ENCODE measurements at regions of chr5 and their contacts with region 1.

Region 1: GRCh38 chr5:89729623-89730301 is 679.8 kb downstream of the CETN3 start:
- DNase-seq: peak; percentile 34
- ATAC-seq: peak; percentile 76
- H3K4me3 ChIP-seq: no peak overlapping the region
- H3K27ac ChIP-seq: no peak overlapping the region
- H3K4me1 ChIP-seq: peaks cover 7% of the 10 kb centered on the region; the same call in 1 of the 2 replicates
- H3K27me3 ChIP-seq: no peaks in the 10 kb centered on the region
- CTCF ChIP-seq: peak; percentile 26 to 54 (median 27); a peak in 4 of 6 replicates
- EP300 ChIP-seq: no peak
- POLR2A ChIP-seq: no peak
- RAD21 ChIP-seq: peak; percentile 65

Region 2: DNA sequence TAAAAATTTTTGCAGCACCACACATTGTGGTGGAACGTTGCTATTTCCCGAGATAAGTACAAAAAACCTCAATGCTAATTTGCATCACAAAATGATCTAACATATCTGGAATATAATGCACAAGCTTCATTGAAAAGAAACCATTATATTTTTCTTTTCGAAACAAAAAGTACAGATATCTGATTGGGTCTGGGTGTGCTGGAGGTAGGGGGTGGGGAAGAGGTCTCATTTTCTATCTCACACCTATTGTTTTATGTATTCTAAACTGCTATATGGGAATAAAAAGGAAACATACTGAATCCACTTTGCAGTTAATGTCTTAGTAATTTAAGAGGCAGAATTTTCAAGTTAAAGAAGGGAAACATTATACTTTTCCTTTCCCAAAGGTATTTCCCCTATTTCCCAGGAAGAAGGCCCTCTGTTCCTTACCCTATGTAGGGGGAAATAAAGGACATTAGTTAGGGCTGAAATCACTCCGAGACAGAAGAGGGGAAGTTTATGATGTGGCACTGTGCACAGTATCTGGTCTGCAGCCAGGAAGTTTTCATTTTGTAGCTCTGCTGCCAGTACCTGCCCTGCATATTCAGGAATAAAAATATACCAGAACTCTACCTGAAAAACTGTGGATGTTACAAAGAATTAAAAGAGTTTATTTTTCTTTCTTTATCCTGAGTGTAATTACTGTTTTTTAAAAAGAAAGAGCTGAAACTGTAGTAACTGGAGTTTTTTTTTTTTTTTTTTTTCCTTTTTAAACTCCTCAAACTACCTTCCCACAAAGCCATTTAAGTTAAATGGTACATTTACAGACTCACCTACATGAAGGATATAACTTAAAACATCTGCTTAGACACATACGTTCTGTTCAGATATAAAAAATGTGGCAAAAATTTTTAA is 854.2 kb before region 1 on chr5:
- CTCF ChIA-PET with region 1: interaction called, 5 read pairs
- POLR2A ChIA-PET with region 1: no interaction called
- RAD21 ChIA-PET with region 1: interaction called, 5 read pairs
- SMC1A ChIA-PET with region 1: interaction called, 4 read pairs
- in situ Hi-C with region 1: no loop called
- intact Hi-C with region 1: loop called (anchors 5 kb)
- DNase-seq: no peak
- ATAC-seq: peak; percentile 65
- H3K4me3 ChIP-seq: peak overlapping the region; percentile 65
- H3K27ac ChIP-seq: peak overlapping the region; percentile 67
- H3K4me1 ChIP-seq: no peaks in the 10 kb centered on the region
- H3K27me3 ChIP-seq: no peaks in the 10 kb centered on the region
- CTCF ChIP-seq: no peak
- EP300 ChIP-seq: no peak
- POLR2A ChIP-seq: peak; percentile 22; the same call in 1 of the 2 replicates
- RAD21 ChIP-seq: no peak

Region 3: DNA sequence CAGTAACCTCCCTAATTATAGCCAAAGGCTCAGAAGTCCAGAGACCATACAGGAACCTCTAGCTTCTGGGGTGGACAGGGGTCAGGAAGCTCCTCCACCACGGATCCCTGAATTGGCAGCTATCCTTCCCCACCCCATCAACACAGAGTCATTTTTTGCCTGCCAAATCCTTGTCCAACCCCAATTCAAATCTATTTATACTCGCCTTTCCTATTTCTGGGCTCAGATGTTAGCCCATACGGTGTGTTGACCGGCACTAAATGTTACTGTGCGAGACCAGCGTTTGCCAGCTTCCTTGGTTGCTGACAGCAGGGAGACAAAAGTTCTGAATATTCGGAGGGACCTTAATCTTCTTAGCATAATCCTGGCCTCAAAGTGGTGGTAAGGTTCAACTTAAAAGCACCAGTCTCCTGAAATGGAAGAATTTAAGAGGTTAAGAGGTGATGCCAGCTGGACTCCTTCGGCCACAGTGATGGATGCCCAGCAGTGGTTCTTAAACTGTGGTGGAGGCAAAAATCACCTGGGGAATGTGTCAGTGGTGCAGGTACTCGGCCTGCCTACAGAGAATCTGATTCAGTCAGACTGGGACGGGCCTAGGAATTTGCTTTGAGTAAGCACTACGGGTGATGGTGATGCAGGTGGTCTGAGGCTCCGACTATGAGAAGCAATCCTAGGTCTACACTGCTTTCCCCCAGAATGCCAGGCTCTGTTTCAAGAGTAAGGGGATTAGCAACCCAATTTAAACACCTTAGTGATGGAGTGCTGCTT is 642.0 kb before region 1 on chr5:
- CTCF ChIA-PET with region 1: interaction called, 10 read pairs
- POLR2A ChIA-PET with region 1: no interaction called
- RAD21 ChIA-PET with region 1: interaction called, 4 read pairs
- SMC1A ChIA-PET with region 1: interaction called, 4 read pairs
- in situ Hi-C with region 1: no loop called
- intact Hi-C with region 1: no loop called
- DNase-seq: no peak
- ATAC-seq: peak; percentile 36; the same call in 2 of the 3 replicates
- H3K4me3 ChIP-seq: no peak overlapping the region
- H3K27ac ChIP-seq: no peak overlapping the region
- H3K4me1 ChIP-seq: no peaks in the 10 kb centered on the region
- H3K27me3 ChIP-seq: no peaks in the 10 kb centered on the region
- CTCF ChIP-seq: no peak
- EP300 ChIP-seq: no peak
- POLR2A ChIP-seq: no peak
- RAD21 ChIP-seq: no peak

Region 4: DNA sequence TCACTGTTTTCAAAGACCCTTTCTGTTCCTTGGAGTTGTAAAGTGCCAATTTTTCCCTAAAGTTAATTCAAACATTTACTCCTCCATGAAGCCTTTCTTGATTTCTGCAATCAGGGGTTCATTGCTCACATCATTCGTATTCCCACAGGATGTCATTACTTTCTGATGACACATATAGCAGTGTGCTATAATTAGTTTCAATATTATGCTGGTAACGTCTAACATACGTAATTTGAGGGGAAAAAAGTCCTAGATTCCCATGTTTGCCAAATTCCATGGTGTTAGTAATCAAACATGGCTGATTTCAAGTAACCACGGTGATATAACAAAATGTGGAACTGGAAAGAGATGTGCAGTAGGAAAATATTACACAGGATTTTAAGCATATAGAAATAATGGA is 378.5 kb before region 1 on chr5:
- CTCF ChIA-PET with region 1: interaction called, 4 read pairs
- POLR2A ChIA-PET with region 1: no interaction called
- RAD21 ChIA-PET with region 1: interaction called, 6 read pairs
- SMC1A ChIA-PET with region 1: interaction called, 10 read pairs
- in situ Hi-C with region 1: no loop called
- intact Hi-C with region 1: no loop called
- DNase-seq: no peak
- ATAC-seq: peak; percentile 16
- H3K4me3 ChIP-seq: no peak overlapping the region
- H3K27ac ChIP-seq: peak overlapping the region; percentile 68; the same call in 1 of the 2 replicates
- H3K4me1 ChIP-seq: peaks cover 18% of the 10 kb centered on the region; the same call in 1 of the 2 replicates
- H3K27me3 ChIP-seq: no peaks in the 10 kb centered on the region
- CTCF ChIP-seq: no peak
- EP300 ChIP-seq: 0 out of 4 replicates have a peak, but pooled peaks of 1 of the 2 experiments have one; percentile 54
- POLR2A ChIP-seq: no peak
- RAD21 ChIP-seq: no peak

Region 5: DNA sequence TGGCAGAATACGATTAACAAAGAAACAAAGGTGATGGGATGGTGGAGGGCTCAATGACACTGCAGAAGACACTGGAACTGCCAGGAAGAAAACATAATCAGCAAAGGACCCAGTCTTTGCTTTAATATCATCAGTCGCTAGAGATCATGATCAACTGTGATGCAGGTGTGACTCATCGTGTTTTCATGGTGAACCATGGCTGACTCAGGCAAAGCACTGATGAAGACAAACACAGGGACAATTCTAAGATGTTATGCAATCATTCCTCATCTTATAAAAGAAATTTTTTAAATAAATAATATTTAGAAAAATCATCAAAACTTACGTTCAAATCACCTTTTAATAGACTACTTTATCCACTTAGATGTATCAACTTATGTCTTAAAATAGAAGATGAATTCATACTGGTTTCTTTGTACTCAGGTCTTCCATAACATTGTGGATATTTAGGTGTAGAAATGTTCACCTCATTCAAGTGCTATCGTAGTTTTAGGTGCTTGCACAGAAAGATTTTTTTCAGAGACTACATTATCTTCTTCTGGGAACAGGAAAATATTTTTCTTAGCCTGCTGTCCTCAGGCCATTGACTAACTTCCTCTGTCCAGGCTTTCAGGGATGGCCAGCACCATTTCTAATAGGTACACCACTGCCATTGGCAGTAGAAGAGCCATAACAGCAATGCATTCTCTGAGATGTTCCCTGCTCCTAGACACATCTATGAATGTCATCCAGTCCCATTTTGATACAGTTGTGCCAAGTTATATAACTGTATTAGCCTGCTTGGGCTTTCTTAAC is 173.3 kb before region 1 on chr5:
- CTCF ChIA-PET with region 1: no interaction called
- POLR2A ChIA-PET with region 1: no interaction called
- RAD21 ChIA-PET with region 1: no interaction called
- SMC1A ChIA-PET with region 1: no interaction called
- in situ Hi-C with region 1: no loop called
- intact Hi-C with region 1: no loop called
- DNase-seq: no peak
- ATAC-seq: no peak
- H3K4me3 ChIP-seq: no peak overlapping the region
- H3K27ac ChIP-seq: no peak overlapping the region
- H3K4me1 ChIP-seq: no peaks in the 10 kb centered on the region
- H3K27me3 ChIP-seq: no peaks in the 10 kb centered on the region
- CTCF ChIP-seq: no peak
- EP300 ChIP-seq: no peak
- POLR2A ChIP-seq: no peak
- RAD21 ChIP-seq: no peak

Region 6: GRCh38 chr5:89707891-89708290 is 21.9 kb before region 1 on chr5:
- CTCF ChIA-PET with region 1: no interaction called
- POLR2A ChIA-PET with region 1: no interaction called
- RAD21 ChIA-PET with region 1: interaction called, 3 read pairs
- SMC1A ChIA-PET with region 1: interaction called, 16 read pairs
- in situ Hi-C with region 1: no loop called
- intact Hi-C with region 1: no loop called
- DNase-seq: no peak
- ATAC-seq: no peak
- H3K4me3 ChIP-seq: no peak overlapping the region
- H3K27ac ChIP-seq: no peak overlapping the region
- H3K4me1 ChIP-seq: no peaks in the 10 kb centered on the region
- H3K27me3 ChIP-seq: no peaks in the 10 kb centered on the region
- CTCF ChIP-seq: no peak
- EP300 ChIP-seq: no peak
- POLR2A ChIP-seq: no peak
- RAD21 ChIP-seq: no peak

Measured in GM12878 (cell line).